CD8-positive, alpha-beta memory T cell (primary cell): ENCODE measurements at regions of chr4 and their contacts with region 1.

Region 1: GRCh38 chr4:145097821-145098674 is at the starts of genes ABCE1 and ANAPC10:
- DNase-seq: peak; percentile 92 to 97 (median 94)
- H3K4me3 ChIP-seq: peak within 1 kb of the TSS; percentile 87
- H3K4me3 Mint-ChIP-seq: peak within 1 kb of the TSS; percentile 90 to 99 (median 95)
- H3K27ac ChIP-seq: peak within 1 kb of the TSS; percentile 95
- H3K27ac Mint-ChIP-seq: peak within 1 kb of the TSS; percentile 95 to 100 (median 98)
- H3K4me1 ChIP-seq: peaks cover 53% of the 10 kb centered on the region
- H3K4me1 Mint-ChIP-seq: peaks cover 38 to 59% (median 54%) of the 10 kb centered on the region in 3 donors
- H3K27me3 ChIP-seq: no peaks in the 10 kb centered on the region
- H3K27me3 Mint-ChIP-seq: no peaks in the 10 kb centered on the region
- total RNA-seq, gene ABCE1: 170 to 179 TPM
- total RNA-seq, gene ANAPC10: 26.0 to 26.8 TPM

Region 2: DNA sequence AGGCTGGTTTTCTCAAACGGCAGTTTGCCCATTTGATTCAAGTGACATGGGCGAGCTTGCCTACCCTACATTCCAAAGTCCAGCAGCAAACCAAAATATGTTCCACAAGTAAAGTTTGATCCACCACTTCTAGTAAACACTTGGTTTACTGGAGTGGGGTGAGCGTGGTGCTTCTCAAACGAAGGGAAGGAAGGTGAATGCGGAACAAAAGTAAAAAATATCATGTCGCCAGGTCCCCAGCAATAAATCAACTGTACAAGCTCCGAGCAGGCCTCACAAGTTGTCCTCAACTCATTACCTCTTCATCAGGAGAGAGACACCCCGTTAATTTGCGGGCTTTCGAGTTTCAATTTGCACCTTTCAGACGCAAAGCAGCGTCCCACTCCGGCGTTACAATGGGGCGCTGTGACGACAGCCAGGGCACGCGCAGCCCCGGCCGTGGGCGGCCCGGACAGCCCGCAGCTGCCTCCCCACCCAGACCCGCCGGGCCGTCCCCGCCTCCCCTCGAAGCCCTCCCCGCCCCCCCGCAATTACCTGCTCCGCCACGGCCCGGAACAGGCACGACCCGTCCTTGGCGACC is 81.3 kb after region 1 on chr4:
- CTCF ChIA-PET with region 1: interaction called, 4 read pairs
- POLR2A ChIA-PET with region 1: interaction called, 18 read pairs
- DNase-seq: peak; percentile 68 to 83 (median 75)
- H3K4me3 ChIP-seq: peak overlapping the region; percentile 82
- H3K4me3 Mint-ChIP-seq: peak overlapping the region; percentile 89 to 98 (median 94)
- H3K27ac ChIP-seq: peak overlapping the region; percentile 90
- H3K27ac Mint-ChIP-seq: peak overlapping the region; percentile 92 to 99 (median 98)
- H3K4me1 ChIP-seq: peaks cover 35% of the 10 kb centered on the region
- H3K4me1 Mint-ChIP-seq: peaks cover 39 to 60% (median 55%) of the 10 kb centered on the region in 3 donors
- H3K27me3 ChIP-seq: no peaks in the 10 kb centered on the region
- H3K27me3 Mint-ChIP-seq: peaks cover 0 to 4% of the 10 kb centered on the region in 2 donors